Caco-2 (cell line): ENCODE measurements at regions of chr13 and their contacts with region 1.

Region 1: DNA sequence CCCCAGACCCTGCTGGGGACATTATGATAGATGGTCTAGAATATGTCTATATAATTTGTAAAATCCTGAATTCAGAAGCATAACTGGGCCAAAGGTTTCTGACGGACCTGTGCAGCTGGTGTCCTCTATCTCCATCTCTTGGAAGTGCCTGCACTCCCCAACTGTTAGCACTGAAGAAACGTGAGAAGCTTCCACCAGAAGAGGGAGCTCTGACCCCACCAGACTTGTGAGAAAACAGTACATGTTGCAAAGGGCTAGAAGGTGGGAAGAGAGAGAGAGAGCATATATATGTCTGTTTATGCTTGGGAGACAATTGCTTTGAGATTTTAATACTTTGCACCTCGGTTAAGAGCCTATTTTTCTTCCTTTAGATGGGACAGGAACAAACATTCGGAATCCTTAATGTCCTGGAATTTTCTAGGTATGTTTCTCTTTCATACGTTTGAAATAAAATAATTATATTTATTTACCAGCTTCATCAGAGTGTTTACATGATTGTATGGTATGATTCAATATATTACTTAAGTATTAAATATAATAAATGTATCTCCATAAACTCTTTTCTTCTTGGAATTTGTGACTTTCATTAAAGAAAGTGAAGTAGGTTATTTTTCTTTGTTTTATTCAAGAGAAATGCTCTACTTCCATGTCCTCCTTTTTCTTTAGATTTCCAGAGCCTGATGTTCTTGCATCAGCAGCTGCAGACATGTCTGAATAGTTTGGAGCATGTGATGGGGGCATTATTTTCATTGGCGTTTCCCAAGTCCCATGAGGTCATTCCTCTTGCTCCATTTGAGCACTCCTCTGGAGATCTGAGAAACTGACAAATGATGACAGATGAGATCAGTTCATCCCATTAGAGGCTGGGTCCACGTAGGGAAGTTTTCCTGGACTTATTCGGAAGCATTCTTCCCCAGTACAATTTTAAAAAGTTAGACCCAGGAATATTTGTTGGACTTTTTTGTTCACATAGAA is 202.9 kb downstream of the ATP8A2 start:
- DNase-seq: peak; percentile 84 to 87
- H3K4me3 ChIP-seq: no peak overlapping the region
- H3K4me3 Mint-ChIP-seq: no peak overlapping the region
- H3K27ac Mint-ChIP-seq: no peak overlapping the region
- H3K4me1 ChIP-seq: no peaks in the 10 kb centered on the region
- H3K4me1 Mint-ChIP-seq: peaks cover 6% of the 10 kb centered on the region
- H3K27me3 ChIP-seq: no peaks in the 10 kb centered on the region
- H3K27me3 Mint-ChIP-seq: peaks cover 22% of the 10 kb centered on the region
- CTCF ChIP-seq: peak; percentile 88 to 96

Region 2: GRCh38 chr13:25819856-25820530 is 245.3 kb after region 1 on chr13:
- CTCF ChIA-PET with region 1: no interaction called
- POLR2A ChIA-PET with region 1: no interaction called
- intact Hi-C with region 1: loop called (anchors 10 kb)
- DNase-seq: no peak
- H3K4me3 ChIP-seq: no peak overlapping the region
- H3K4me3 Mint-ChIP-seq: no peak overlapping the region
- H3K27ac Mint-ChIP-seq: no peak overlapping the region
- H3K4me1 ChIP-seq: no peaks in the 10 kb centered on the region
- H3K4me1 Mint-ChIP-seq: no peaks in the 10 kb centered on the region
- H3K27me3 ChIP-seq: no peaks in the 10 kb centered on the region
- H3K27me3 Mint-ChIP-seq: peaks cover 13% of the 10 kb centered on the region
- CTCF ChIP-seq: no peak

Region 3: GRCh38 chr13:26074706-26075105 is 500.0 kb after region 1 on chr13:
- CTCF ChIA-PET with region 1: interaction called, 11 read pairs
- POLR2A ChIA-PET with region 1: no interaction called
- intact Hi-C with region 1: loop called (anchors 1 kb)
- DNase-seq: peak; percentile 62
- H3K4me3 ChIP-seq: no peak overlapping the region
- H3K4me3 Mint-ChIP-seq: no peak overlapping the region
- H3K27ac Mint-ChIP-seq: no peak overlapping the region
- H3K4me1 ChIP-seq: peaks cover 4% of the 10 kb centered on the region; the same call in 1 of the 2 replicates
- H3K4me1 Mint-ChIP-seq: no peaks in the 10 kb centered on the region
- H3K27me3 ChIP-seq: no peaks in the 10 kb centered on the region
- H3K27me3 Mint-ChIP-seq: peaks cover 12% of the 10 kb centered on the region
- CTCF ChIP-seq: peak; percentile 13